Cardiac septum (tissue), 1 donor: ENCODE measurements at regions of chr13 and their contacts with region 1.

Region 1: GRCh38 chr13:24160454-24161009 is at the start of gene SPATA13:
- DNase-seq: peak; percentile 94
- total RNA-seq, gene SPATA13: 8.0 TPM

Region 2: DNA sequence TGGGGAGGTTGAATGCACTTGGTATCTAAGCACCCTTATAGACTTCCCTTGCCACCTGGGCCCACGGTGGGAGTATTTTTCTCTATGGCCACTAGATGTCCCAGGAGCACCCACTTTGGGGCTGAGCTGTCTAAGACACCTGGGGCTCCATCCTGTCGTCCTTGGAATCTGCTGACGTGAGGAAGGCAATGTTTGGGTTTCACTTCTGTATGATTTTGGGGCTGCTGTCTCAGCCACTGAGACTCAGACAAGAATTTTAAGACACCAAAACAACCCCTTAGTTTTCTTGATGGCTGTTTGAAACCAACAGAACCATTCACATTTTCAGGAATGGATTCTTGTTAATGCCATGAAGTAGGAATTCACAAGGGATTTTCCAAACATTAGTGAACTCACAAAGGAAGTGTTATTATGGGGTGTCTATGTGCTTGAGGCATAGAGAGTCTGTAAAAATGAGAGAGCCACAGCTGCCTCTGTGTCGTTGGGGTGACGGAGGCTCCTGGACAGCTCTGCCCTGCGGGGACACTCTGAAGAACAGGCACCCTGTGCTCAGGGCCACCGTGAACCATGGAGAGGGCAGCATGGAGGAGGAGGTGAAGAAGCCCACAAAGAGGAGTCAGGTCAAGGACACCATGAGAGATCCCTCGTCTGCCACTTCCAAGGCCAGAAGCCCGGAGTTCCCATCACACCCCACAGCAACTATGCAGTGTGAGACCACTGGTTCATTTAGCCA is 106.8 kb before region 1 on chr13:
- intact Hi-C with region 1: loop called (anchors 5 kb)
- DNase-seq: no peak